PC-3 (cell line): ENCODE measurements at regions of chr9 and their contacts with region 1.

Region 1: DNA sequence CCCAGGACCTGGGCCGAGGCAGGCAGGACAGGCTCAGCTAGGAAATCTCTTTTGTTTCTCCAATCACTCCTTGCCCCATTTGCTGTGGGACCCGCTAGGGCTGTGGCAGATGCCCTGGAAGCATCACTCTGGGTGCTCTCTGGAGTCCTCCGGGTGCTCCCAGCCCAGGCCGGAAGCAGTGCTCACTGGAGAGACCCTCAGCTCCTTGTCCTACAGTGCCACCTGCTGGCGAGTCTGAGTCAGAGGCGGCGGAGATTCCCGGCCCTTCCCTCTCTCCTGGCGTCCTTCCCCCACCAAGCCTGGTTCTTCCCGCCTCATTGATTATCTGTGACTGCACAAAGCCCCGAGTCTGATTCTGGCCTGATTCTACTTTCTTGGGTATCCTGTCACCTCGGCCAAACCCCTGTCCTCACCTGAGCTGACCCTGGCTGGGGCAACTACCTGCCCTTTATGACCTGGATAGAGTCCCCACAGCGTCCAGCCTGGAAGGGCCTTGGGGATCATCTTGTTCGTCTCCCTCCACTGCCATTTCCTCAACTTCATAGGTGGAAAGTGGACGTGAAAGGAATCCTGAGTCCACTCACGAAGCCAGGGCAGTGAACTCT is 7.3 kb upstream of the BARHL1 start:
- DNase-seq: peak; percentile 72
- ATAC-seq: peak; percentile 82
- H3K4me3 ChIP-seq: no peak overlapping the region
- H3K27ac ChIP-seq: no peak overlapping the region
- H3K4me1 ChIP-seq: no peaks in the 10 kb centered on the region
- H3K27me3 ChIP-seq: no peaks in the 10 kb centered on the region
- CTCF ChIP-seq: peak; percentile 78

Region 2: DNA sequence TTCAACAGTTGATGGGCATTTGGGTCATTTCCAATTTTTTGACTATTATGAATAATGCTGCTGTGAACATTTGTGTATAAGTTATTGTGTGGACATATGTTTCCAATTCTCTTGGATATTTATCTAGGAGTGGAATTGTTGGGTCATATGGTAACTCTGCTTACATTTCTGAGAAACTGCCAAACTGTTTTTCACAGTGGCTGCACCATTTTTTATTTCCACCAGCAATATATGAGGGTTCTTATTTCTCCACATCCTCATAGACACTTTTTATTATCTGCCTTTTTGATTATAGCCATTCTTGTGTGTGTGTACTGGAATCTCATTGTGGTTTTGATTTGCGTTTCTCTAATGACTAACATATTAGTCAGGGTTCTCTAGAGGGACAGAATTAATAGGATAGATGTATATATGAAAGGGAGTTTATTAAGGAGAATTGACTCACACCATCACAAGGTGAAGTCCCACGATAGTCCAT is 480.8 kb before region 1 on chr9:
- CTCF ChIA-PET with region 1: no interaction called
- POLR2A ChIA-PET with region 1: no interaction called
- intact Hi-C with region 1: no loop called
- DNase-seq: peak; percentile 79
- ATAC-seq: peak; percentile 95
- H3K4me3 ChIP-seq: no peak overlapping the region
- H3K27ac ChIP-seq: peak overlapping the region; percentile 96
- H3K4me1 ChIP-seq: peaks cover 26% of the 10 kb centered on the region
- H3K27me3 ChIP-seq: no peaks in the 10 kb centered on the region
- CTCF ChIP-seq: no peak

Region 3: GRCh38 chr9:132411091-132411508 is 164.0 kb before region 1 on chr9:
- CTCF ChIA-PET with region 1: interaction called, 5 read pairs
- POLR2A ChIA-PET with region 1: no interaction called
- intact Hi-C with region 1: loop called (anchors 1 kb)
- DNase-seq: peak; percentile 73
- ATAC-seq: peak; percentile 38
- H3K4me3 ChIP-seq: peak overlapping the region; percentile 63
- H3K27ac ChIP-seq: no peak overlapping the region
- H3K4me1 ChIP-seq: peaks cover 12% of the 10 kb centered on the region
- H3K27me3 ChIP-seq: peaks cover 34% of the 10 kb centered on the region
- CTCF ChIP-seq: peak; percentile 73

Region 4: GRCh38 chr9:132507746-132508469 is 67.2 kb before region 1 on chr9:
- CTCF ChIA-PET with region 1: interaction called, 3 read pairs
- POLR2A ChIA-PET with region 1: no interaction called
- intact Hi-C with region 1: loop called (anchors 1 kb)
- DNase-seq: peak; percentile 75
- ATAC-seq: peak; percentile 82
- H3K4me3 ChIP-seq: no peak overlapping the region
- H3K27ac ChIP-seq: no peak overlapping the region
- H3K4me1 ChIP-seq: no peaks in the 10 kb centered on the region
- H3K27me3 ChIP-seq: peaks cover 24% of the 10 kb centered on the region
- CTCF ChIP-seq: peak; percentile 81